ENCODE measurements at regions of chr4 and their contacts with region 1.

Region 1: DNA sequence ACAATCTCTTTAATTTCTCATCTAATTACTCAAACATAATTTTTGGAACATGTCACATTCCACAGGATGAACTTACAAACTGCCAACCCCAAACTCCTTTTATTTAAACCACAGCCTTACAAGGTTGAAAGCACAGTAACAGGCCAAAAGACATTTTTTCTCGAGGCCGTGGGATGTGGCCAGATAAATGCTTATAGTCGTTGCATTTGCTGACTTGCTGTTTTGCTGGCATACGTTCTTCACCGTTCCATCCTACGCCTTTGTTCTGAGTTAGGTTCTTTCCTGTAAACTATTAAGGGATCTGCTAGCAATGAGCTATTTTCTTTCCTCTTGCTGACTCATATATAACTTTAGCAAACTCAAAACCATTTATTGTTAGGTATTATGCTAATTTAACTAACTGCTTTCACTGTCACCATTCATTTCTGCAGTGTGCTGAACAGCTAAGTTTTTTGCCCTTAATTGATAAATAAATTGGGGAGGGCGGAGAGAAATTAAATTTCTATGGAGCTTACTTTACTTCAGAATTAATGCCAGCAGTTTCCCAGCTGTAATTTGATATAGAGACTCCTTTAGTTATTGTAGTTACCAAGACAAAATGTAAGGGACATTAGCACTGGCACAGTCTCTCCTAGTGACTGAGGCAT is 135.1 kb upstream of the PACRGL start:
- DNase-seq: no peak
- ATAC-seq: no peak
- H3K4me3 ChIP-seq: no peak overlapping the region
- H3K27ac ChIP-seq: no peak overlapping the region
- H3K4me1 ChIP-seq: no peaks in the 10 kb centered on the region
- H3K27me3 ChIP-seq: no peaks in the 10 kb centered on the region
- CTCF ChIP-seq: no peak
- EP300 ChIP-seq: no peak
- POLR2A ChIP-seq: no peak
- RAD21 ChIP-seq: no peak

Region 2: GRCh38 chr4:20203508-20203907 is 361.7 kb before region 1 on chr4:
- CTCF ChIA-PET with region 1: no interaction called
- POLR2A ChIA-PET with region 1: no interaction called
- in situ Hi-C with region 1: no loop called
- intact Hi-C with region 1: no loop called
- DNase-seq: no peak
- ATAC-seq: no peak
- H3K4me3 ChIP-seq: no peak overlapping the region
- H3K27ac ChIP-seq: no peak overlapping the region
- H3K4me1 ChIP-seq: no peaks in the 10 kb centered on the region
- H3K27me3 ChIP-seq: no peaks in the 10 kb centered on the region
- CTCF ChIP-seq: no peak
- EP300 ChIP-seq: no peak
- POLR2A ChIP-seq: no peak
- RAD21 ChIP-seq: no peak

Region 3: GRCh38 chr4:20652231-20652885 is 87.2 kb after region 1 on chr4:
- CTCF ChIA-PET with region 1: no interaction called
- POLR2A ChIA-PET with region 1: no interaction called
- in situ Hi-C with region 1: loop called (anchors 10 kb)
- intact Hi-C with region 1: no loop called
- DNase-seq: no peak
- ATAC-seq: no peak
- H3K4me3 ChIP-seq: no peak overlapping the region
- H3K27ac ChIP-seq: no peak overlapping the region
- H3K4me1 ChIP-seq: no peaks in the 10 kb centered on the region
- H3K27me3 ChIP-seq: no peaks in the 10 kb centered on the region
- CTCF ChIP-seq: no peak
- EP300 ChIP-seq: no peak
- POLR2A ChIP-seq: no peak
- RAD21 ChIP-seq: no peak

Measured in K562 (cell line).